ENCODE measurements at regions of chr1 and their contacts with region 1.

Region 1: DNA sequence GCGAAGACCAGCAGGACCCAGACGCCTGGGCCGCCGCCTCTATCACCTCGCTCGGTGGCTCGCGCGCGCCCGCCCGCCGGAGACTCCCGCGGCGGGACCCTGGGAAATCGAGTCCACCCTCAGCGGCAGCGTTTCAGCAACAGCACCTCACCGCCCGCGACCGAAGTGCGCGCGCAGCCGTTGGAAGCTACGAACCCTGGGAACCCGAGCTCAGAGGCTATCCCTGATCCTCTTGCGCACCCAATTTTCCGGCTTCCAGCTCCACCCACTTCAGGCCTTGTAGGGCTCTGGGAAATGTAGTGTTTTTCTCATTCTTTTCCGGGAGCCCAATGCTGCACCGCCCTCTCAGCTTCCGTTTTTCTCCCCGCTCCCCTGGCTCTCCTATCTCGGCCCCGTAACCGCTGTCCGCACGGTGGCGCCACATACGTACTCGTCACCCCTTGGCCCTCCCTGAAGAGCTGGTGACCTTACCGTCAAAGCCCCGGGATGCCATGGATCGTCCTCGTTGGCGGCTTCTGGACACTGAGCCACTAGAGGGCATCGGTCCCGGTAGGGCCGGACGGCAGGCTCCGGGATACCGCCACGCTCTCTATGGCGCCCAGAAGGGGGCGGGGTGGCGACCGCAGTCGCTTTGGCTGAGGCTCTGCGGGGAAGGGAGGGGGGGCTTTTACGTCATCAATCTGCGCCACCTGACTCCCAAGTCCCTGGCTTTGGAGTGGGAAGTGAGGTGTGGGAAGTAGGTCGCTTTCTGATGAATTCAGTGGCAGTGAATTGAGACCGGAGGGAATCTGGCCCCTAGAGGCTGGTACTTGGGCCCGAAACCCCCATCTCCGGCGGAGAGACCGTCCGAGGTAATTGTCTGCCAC is at the starts of genes ODR4 and TPR:
- DNase-seq: peak; percentile 92 to 99 (median 96)
- ATAC-seq: peak; percentile 85 to 90 (median 88)
- H3K4me3 ChIP-seq: peak within 1 kb of the TSS; percentile 72 to 97
- H3K4me3 Mint-ChIP-seq: peak within 1 kb of the TSS; percentile 92 to 97 (median 97)
- H3K27ac ChIP-seq: peak within 1 kb of the TSS; percentile 84
- H3K27ac Mint-ChIP-seq: peak within 1 kb of the TSS; percentile 93 to 98
- H3K4me1 ChIP-seq: peaks cover 16 to 23% of the 10 kb centered on the region in 2 experiments
- H3K4me1 Mint-ChIP-seq: peaks cover 46 to 54% (median 51%) of the 10 kb centered on the region in 3 donors
- H3K27me3 ChIP-seq: no peaks in the 10 kb centered on the region
- H3K27me3 Mint-ChIP-seq: no peaks in the 10 kb centered on the region
- total RNA-seq, gene ODR4: 13.2 to 22.2 (median 14.4) TPM
- total RNA-seq, gene TPR: 128 to 144 (median 137) TPM

Region 2: GRCh38 chr1:184610876-184611595 is 1764.3 kb before region 1 on chr1:
- CTCF ChIA-PET with region 1: no interaction called
- POLR2A ChIA-PET with region 1: no interaction called
- DNase-seq: no peak
- ATAC-seq: no peak
- H3K4me3 ChIP-seq: no peak overlapping the region
- H3K4me3 Mint-ChIP-seq: no peak overlapping the region
- H3K27ac ChIP-seq: no peak overlapping the region
- H3K27ac Mint-ChIP-seq: no peak overlapping the region
- H3K4me1 ChIP-seq: no peaks in the 10 kb centered on the region
- H3K4me1 Mint-ChIP-seq: no peaks in the 10 kb centered on the region
- H3K27me3 ChIP-seq: no peaks in the 10 kb centered on the region
- H3K27me3 Mint-ChIP-seq: no peaks in the 10 kb centered on the region

Region 3: GRCh38 chr1:186009039-186009737 is 366.1 kb before region 1 on chr1:
- CTCF ChIA-PET with region 1: no interaction called
- POLR2A ChIA-PET with region 1: no interaction called
- DNase-seq: no peak
- ATAC-seq: no peak
- H3K4me3 ChIP-seq: no peak overlapping the region
- H3K4me3 Mint-ChIP-seq: no peak overlapping the region
- H3K27ac ChIP-seq: no peak overlapping the region
- H3K27ac Mint-ChIP-seq: peak overlapping the region in 1 of 2 donors; percentile 7
- H3K4me1 ChIP-seq: no peaks in the 10 kb centered on the region
- H3K4me1 Mint-ChIP-seq: peaks cover 6% of the 10 kb centered on the region in 3 donors
- H3K27me3 ChIP-seq: no peaks in the 10 kb centered on the region
- H3K27me3 Mint-ChIP-seq: peaks cover 0 to 4% of the 10 kb centered on the region in 2 donors

Region 4: DNA sequence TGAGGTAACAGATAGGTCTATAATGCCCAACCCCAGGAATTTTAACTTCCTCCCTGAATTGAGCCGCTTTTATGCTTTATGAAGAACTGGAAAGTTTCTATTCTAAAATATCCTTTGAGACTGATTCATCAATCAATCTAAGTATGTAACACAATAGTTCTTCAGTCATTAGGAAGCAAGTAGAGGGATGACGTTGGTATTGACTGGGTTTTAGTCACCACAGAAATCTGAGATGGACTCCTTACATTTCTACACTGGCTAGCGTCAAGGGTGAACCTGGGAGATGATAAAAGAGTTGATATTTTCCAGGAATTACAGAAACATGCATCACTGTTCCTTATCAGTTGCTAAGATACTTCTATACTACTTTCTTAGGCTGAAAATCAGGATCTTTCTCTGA is 333.1 kb before region 1 on chr1:
- CTCF ChIA-PET with region 1: no interaction called
- POLR2A ChIA-PET with region 1: no interaction called
- DNase-seq: no peak
- ATAC-seq: no peak
- H3K4me3 ChIP-seq: no peak overlapping the region
- H3K4me3 Mint-ChIP-seq: no peak overlapping the region
- H3K27ac ChIP-seq: no peak overlapping the region
- H3K27ac Mint-ChIP-seq: no peak overlapping the region
- H3K4me1 ChIP-seq: no peaks in the 10 kb centered on the region
- H3K4me1 Mint-ChIP-seq: no peaks in the 10 kb centered on the region
- H3K27me3 ChIP-seq: no peaks in the 10 kb centered on the region
- H3K27me3 Mint-ChIP-seq: peaks cover 4 to 7% of the 10 kb centered on the region in 2 donors

Region 5: DNA sequence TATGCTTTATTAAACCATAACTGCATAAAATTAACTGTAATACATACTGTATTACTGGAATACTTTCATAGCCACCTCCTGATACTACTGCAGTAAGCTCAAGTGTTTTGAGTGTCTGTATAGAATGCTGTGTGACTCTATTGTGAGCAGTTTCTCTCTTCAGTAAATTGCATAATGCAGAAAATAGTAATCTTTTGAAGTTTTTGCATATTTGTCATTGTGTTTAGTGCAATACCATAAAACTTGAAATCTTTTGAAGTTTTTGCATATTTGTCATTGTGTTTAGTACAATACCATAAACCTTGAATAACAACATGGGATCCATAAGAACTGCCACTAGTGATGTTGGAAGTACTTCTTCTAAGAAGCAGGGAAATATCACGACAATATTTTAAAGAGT is 11.4 kb before region 1 on chr1:
- CTCF ChIA-PET with region 1: interaction called, 7 to 10 read pairs
- POLR2A ChIA-PET with region 1: interaction called in 1 of 2 experiments, 6 read pairs
- DNase-seq: no peak
- ATAC-seq: no peak
- H3K4me3 ChIP-seq: no peak overlapping the region
- H3K4me3 Mint-ChIP-seq: no peak overlapping the region
- H3K27ac ChIP-seq: no peak overlapping the region
- H3K27ac Mint-ChIP-seq: no peak overlapping the region
- H3K4me1 ChIP-seq: no peaks in the 10 kb centered on the region
- H3K4me1 Mint-ChIP-seq: peaks cover 7 to 17% (median 13%) of the 10 kb centered on the region in 3 donors
- H3K27me3 ChIP-seq: no peaks in the 10 kb centered on the region
- H3K27me3 Mint-ChIP-seq: no peaks in the 10 kb centered on the region

Region 6: DNA sequence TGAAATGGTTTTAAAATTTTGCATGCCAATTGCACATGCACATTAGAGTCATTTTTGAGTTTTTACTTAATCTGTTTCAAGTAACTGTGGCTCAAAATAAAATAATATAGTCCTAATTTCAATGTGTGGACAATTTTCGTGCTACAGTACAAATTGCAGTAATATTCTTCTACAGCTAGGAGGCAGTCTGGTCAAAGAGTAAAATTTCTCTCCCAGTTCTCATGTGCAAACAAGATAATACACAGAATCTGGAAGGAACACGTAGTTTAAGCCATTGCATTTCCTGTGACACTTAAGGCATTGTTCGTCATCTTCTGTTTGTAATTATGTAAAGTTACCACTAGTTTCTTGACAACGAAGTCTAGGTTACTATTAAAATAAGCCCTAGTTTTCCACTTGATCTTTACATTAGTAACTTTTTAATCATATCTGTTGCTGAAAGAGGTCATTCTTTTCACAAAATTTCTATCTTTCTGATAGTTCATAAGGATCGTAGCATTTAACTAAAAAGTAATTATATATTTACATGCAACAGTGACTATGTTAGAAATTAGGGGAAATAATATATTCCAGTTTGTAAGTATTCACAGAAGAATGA is 29.2 kb after region 1 on chr1:
- CTCF ChIA-PET with region 1: interaction called in 1 of 2 experiments, 12 read pairs
- POLR2A ChIA-PET with region 1: no interaction called
- DNase-seq: peak in 3 of 35 experiments; percentile 1 to 57 (median 9)
- ATAC-seq: peak in 3 of 4 experiments; percentile 31 to 90 (median 38)
- H3K4me3 ChIP-seq: no peak overlapping the region
- H3K4me3 Mint-ChIP-seq: no peak overlapping the region
- H3K27ac ChIP-seq: no peak overlapping the region
- H3K27ac Mint-ChIP-seq: no peak overlapping the region
- H3K4me1 ChIP-seq: no peaks in the 10 kb centered on the region
- H3K4me1 Mint-ChIP-seq: no peaks in the 10 kb centered on the region
- H3K27me3 ChIP-seq: no peaks in the 10 kb centered on the region
- H3K27me3 Mint-ChIP-seq: no peaks in the 10 kb centered on the region

Region 7: GRCh38 chr1:186442651-186443114 is 67.4 kb after region 1 on chr1:
- CTCF ChIA-PET with region 1: no interaction called
- POLR2A ChIA-PET with region 1: no interaction called
- DNase-seq: no peak
- ATAC-seq: no peak
- H3K4me3 ChIP-seq: no peak overlapping the region
- H3K4me3 Mint-ChIP-seq: no peak overlapping the region
- H3K27ac ChIP-seq: no peak overlapping the region
- H3K27ac Mint-ChIP-seq: no peak overlapping the region
- H3K4me1 ChIP-seq: no peaks in the 10 kb centered on the region
- H3K4me1 Mint-ChIP-seq: peaks cover 0 to 3% (median 0%) of the 10 kb centered on the region in 3 donors
- H3K27me3 ChIP-seq: no peaks in the 10 kb centered on the region
- H3K27me3 Mint-ChIP-seq: no peaks in the 10 kb centered on the region

Measured in T-cell (primary cell).